Activated CD4-positive, alpha-beta T cell treated with anti-CD3 and anti-CD28 coated beads, Interleukin-2, amount 10 ng/mL, durations not matched to agents 24 days and 14 days (primary cell): ENCODE measurements at regions of chr2 and their contacts with region 1.

Region 1: DNA sequence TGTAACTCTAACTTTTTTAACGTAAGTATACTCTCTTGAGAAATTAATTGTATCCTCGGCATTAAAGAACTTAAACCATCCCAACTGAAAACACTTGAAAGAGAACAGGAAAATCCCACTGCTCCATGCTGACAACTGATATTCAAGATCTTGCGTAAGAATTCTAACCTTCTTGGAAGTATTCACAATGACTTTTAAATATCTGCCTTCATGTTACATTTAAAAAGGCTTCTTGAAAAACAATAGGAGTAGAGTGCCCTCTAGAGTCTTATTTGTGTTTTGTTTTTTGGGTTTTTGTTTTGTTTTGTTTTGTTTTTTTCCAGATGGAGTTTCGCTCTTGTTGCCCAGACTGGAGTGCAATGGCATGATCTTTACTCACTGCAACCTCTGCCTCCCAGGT is 65.4 kb upstream of the DNAJC10 start:
- DNase-seq: no peak
- H3K4me3 Mint-ChIP-seq: no peak overlapping the region
- H3K27ac Mint-ChIP-seq: no peak overlapping the region
- H3K4me1 Mint-ChIP-seq: peaks cover 12% of the 10 kb centered on the region
- H3K27me3 Mint-ChIP-seq: peaks cover 5% of the 10 kb centered on the region

Region 2: DNA sequence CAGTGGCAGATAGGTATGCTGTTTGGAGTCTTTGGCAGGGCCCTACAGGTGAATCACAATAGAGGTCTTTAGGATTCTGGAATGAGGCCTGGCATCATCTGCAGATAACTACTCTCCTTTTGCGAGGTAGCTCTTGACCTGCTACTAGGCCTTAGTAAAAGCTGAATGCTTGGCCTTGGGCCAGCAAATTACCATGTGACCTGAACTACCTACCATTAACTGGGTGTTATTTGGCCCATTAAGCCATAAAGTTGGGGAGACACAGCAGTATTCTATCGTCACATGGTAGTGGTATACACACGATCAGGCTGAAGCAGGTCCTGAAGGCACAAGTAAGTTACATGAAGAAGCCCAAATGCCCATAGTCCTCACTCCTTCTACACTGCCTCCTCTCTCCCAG is 486.8 kb before region 1 on chr2:
- intact Hi-C with region 1: no loop called
- DNase-seq: no peak
- H3K4me3 Mint-ChIP-seq: no peak overlapping the region
- H3K27ac Mint-ChIP-seq: no peak overlapping the region
- H3K4me1 Mint-ChIP-seq: no peaks in the 10 kb centered on the region
- H3K27me3 Mint-ChIP-seq: no peaks in the 10 kb centered on the region

Region 3: GRCh38 chr2:182186132-182186735 is 464.5 kb before region 1 on chr2:
- intact Hi-C with region 1: loop called (anchors 1 kb)
- DNase-seq: no peak
- H3K4me3 Mint-ChIP-seq: no peak overlapping the region
- H3K27ac Mint-ChIP-seq: no peak overlapping the region
- H3K4me1 Mint-ChIP-seq: no peaks in the 10 kb centered on the region
- H3K27me3 Mint-ChIP-seq: peaks cover 16% of the 10 kb centered on the region

Region 4: GRCh38 chr2:182240862-182241371 is 409.8 kb before region 1 on chr2:
- intact Hi-C with region 1: loop called (anchors 1 kb)
- DNase-seq: peak; percentile 70
- H3K4me3 Mint-ChIP-seq: no peak overlapping the region
- H3K27ac Mint-ChIP-seq: no peak overlapping the region
- H3K4me1 Mint-ChIP-seq: no peaks in the 10 kb centered on the region
- H3K27me3 Mint-ChIP-seq: peaks cover 2% of the 10 kb centered on the region